ENCODE measurements at regions of chr18 and their contacts with region 1.

Region 1: GRCh38 chr18:36757081-36757480 is 71.7 kb downstream of the TPGS2 start:
- DNase-seq: no peak
- ATAC-seq: peak in 6 of 8 donors; percentile 32 to 58 (median 57)
- H3K4me3 ChIP-seq: no peak overlapping the region
- H3K27ac ChIP-seq: no peak overlapping the region
- H3K4me1 ChIP-seq: peaks cover 0 to 44% (median 13%) of the 10 kb centered on the region in 9 donors
- H3K27me3 ChIP-seq: no peaks in the 10 kb centered on the region
- CTCF ChIP-seq: peak in 8 of 9 donors; percentile 32 to 68 (median 66)

Region 2: DNA sequence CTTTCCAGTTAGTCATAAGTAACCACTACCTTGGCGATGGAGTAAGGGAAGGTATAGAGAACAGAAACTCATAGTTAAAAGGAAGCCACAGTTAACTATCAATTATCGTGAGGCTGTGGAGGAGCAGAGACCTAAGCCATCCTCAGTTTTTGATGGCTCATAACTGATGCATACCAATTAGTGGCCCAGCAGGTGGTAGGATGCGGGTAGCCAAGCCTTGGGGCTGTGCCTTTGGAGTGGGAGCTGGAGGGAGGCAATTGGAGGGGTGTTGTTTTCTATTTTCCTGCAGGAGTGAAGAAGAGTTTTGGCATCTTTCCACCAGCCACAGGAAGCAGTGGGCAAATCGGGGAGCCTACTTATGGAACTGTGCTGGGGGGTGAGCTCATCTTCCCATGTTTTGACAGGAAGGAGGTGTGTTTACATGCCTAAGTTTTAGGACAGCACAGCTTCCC is 123.1 kb before region 1 on chr18:
- intact Hi-C with region 1: no loop called
- DNase-seq: no peak
- ATAC-seq: no peak
- H3K4me3 ChIP-seq: no peak overlapping the region
- H3K27ac ChIP-seq: no peak overlapping the region
- H3K4me1 ChIP-seq: peaks cover 2 to 68% (median 27%) of the 10 kb centered on the region in 9 donors
- H3K27me3 ChIP-seq: no peaks in the 10 kb centered on the region
- CTCF ChIP-seq: no peak

Region 3: GRCh38 chr18:36688020-36688965 is 68.8 kb before region 1 on chr18:
- intact Hi-C with region 1: loop called (anchors 2 to 10 kb)
- DNase-seq: peak in 1 of 2 donors; percentile 27
- ATAC-seq: peak in 4 of 8 donors; percentile 59 to 77 (median 61)
- H3K4me3 ChIP-seq: no peak overlapping the region
- H3K27ac ChIP-seq: no peak overlapping the region
- H3K4me1 ChIP-seq: peaks cover 0 to 17% (median 0%) of the 10 kb centered on the region in 9 donors
- H3K27me3 ChIP-seq: no peaks in the 10 kb centered on the region
- CTCF ChIP-seq: peak; percentile 49 to 89 (median 82)

Region 4: DNA sequence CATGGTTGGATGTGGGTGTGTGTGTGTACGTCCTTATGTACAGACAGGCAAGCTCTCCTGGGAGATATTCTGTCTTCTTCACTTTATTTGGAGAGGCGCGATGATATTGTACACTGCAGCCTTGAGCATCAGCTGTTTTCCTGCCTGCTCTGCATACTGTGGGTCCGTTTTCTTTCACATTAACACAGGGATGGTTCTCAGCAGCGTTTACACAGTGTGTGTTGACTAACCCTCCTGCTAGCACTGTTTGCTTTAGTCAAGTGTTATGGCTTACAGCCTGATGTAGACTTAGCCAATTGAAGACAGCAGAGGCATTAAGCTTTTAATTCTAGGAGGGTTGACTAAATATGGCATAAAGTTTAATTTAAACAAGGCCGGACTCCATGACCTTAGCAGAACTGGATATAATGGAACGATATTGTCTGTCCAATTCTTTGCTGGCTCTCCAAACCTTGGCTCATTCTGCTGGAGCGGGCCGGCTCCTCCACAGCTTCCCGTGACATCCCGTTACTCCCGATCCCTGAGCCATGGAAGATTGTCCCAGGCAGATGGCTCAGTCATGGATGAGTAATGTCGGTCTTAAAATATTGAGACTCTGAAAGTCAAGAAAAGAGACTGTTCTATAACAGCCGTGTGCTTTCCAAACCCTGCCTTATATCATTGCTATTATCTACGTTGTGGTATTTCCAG is 63.0 kb before region 1 on chr18:
- intact Hi-C with region 1: loop called (anchors 2 to 10 kb)
- DNase-seq: no peak
- ATAC-seq: peak in 1 of 8 donors; percentile 41
- H3K4me3 ChIP-seq: no peak overlapping the region
- H3K27ac ChIP-seq: no peak overlapping the region
- H3K4me1 ChIP-seq: peaks cover 0 to 8% (median 0%) of the 10 kb centered on the region in 9 donors
- H3K27me3 ChIP-seq: no peaks in the 10 kb centered on the region
- CTCF ChIP-seq: no peak

Region 5: GRCh38 chr18:36798738-36799473 is 41.8 kb after region 1 on chr18:
- intact Hi-C with region 1: no loop called
- DNase-seq: no peak
- ATAC-seq: no peak
- H3K4me3 ChIP-seq: no peak overlapping the region
- H3K27ac ChIP-seq: no peak overlapping the region
- H3K4me1 ChIP-seq: no peaks in the 10 kb centered on the region
- H3K27me3 ChIP-seq: no peaks in the 10 kb centered on the region
- CTCF ChIP-seq: no peak